H1 (cell line): ENCODE measurements at regions of chr2 and their contacts with region 1.

Region 1: DNA sequence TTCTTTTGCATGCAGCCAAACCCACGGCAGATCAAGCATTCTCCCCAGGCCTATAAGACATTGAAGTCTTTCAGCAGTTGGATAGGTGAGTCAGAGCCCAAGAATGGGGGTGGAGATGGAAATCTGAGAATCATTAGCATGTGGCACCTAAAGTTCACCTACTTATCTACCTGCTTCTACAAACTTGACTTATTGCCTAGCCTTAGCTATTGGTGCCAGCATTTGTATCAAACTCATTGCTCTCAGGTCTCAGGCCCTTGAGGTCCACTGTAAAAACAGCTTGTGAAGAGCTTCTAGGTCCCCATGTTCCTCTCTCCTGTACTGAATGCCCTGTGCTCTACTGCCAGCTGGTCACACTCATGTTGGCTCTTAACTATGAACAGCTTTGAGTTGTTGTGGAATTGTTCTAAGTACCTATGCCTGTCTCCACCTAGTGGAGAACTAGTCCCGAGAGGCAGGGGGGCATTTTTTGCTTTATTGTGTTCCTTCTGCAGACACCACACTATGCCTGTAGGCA is 278.4 kb upstream of the SPRED2 start:
- DNase-seq: peak in 1 of 2 experiments; percentile 5
- H3K4me3 ChIP-seq: no peak overlapping the region
- H3K27ac ChIP-seq: no peak overlapping the region
- H3K4me1 ChIP-seq: no peaks in the 10 kb centered on the region
- H3K27me3 ChIP-seq: no peaks in the 10 kb centered on the region
- CTCF ChIP-seq: peak in 2 of 3 experiments; percentile 67 to 77; a peak in 3 of 4 replicates
- EP300 ChIP-seq: no peak
- POLR2A ChIP-seq: no peak
- RAD21 ChIP-seq: peak; percentile 60 to 70

Region 2: GRCh38 chr2:65620524-65620923 is 90.3 kb before region 1 on chr2:
- CTCF ChIA-PET with region 1: interaction called, 23 read pairs
- POLR2A ChIA-PET with region 1: no interaction called
- DNase-seq: no peak
- H3K4me3 ChIP-seq: no peak overlapping the region
- H3K27ac ChIP-seq: no peak overlapping the region
- H3K4me1 ChIP-seq: no peaks in the 10 kb centered on the region
- H3K27me3 ChIP-seq: peaks cover 0 to 3% (median 0%) of the 10 kb centered on the region in 4 experiments; a peak in 2 of 7 replicates
- CTCF ChIP-seq: peak in 1 of 3 experiments; percentile 12; a peak in 1 of 4 replicates
- EP300 ChIP-seq: no peak
- POLR2A ChIP-seq: no peak
- RAD21 ChIP-seq: peak; percentile 56 to 59

Region 3: DNA sequence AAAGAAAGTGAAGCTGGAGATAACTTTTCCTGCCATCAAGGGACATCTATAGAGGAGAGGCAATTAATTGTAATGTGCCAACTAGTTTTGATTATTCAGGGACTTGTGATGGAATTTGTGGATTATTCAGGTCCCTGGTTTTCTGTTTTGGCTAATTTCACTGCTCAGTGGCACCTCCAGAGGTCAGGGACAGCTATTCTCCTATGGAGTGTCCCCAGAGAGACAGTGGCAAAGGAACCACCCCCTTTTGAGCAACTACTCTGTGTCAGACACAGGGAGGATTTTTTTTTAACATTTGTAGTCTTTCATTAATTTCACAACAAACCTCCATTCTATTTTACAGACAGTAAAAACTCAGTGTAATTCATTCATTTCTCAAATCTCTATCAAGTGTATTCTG is 72.4 kb before region 1 on chr2:
- CTCF ChIA-PET with region 1: interaction called, 27 read pairs
- POLR2A ChIA-PET with region 1: no interaction called
- DNase-seq: no peak
- H3K4me3 ChIP-seq: no peak overlapping the region
- H3K27ac ChIP-seq: no peak overlapping the region
- H3K4me1 ChIP-seq: no peaks in the 10 kb centered on the region; a peak in 1 of 7 replicates
- H3K27me3 ChIP-seq: peaks cover 0 to 3% (median 3%) of the 10 kb centered on the region in 4 experiments; a peak in 2 of 7 replicates
- CTCF ChIP-seq: peak in 2 of 3 experiments; percentile 25 to 46; a peak in 2 of 4 replicates
- EP300 ChIP-seq: no peak
- POLR2A ChIP-seq: no peak
- RAD21 ChIP-seq: peak; percentile 10 to 31; a peak in 1 of 4 replicates

Region 4: GRCh38 chr2:65675350-65675749 is 35.5 kb before region 1 on chr2:
- CTCF ChIA-PET with region 1: interaction called, 11 read pairs
- POLR2A ChIA-PET with region 1: no interaction called
- DNase-seq: no peak
- H3K4me3 ChIP-seq: no peak overlapping the region
- H3K27ac ChIP-seq: no peak overlapping the region
- H3K4me1 ChIP-seq: no peaks in the 10 kb centered on the region
- H3K27me3 ChIP-seq: no peaks in the 10 kb centered on the region
- CTCF ChIP-seq: no peak
- EP300 ChIP-seq: no peak
- POLR2A ChIP-seq: no peak
- RAD21 ChIP-seq: no peak

Region 5: GRCh38 chr2:65686927-65687521 is 23.8 kb before region 1 on chr2:
- CTCF ChIA-PET with region 1: interaction called, 18 read pairs
- POLR2A ChIA-PET with region 1: no interaction called
- DNase-seq: no peak
- H3K4me3 ChIP-seq: no peak overlapping the region
- H3K27ac ChIP-seq: no peak overlapping the region
- H3K4me1 ChIP-seq: no peaks in the 10 kb centered on the region
- H3K27me3 ChIP-seq: no peaks in the 10 kb centered on the region
- CTCF ChIP-seq: peak in 2 of 3 experiments; percentile 41 to 42; a peak in 2 of 4 replicates
- EP300 ChIP-seq: no peak
- POLR2A ChIP-seq: no peak
- RAD21 ChIP-seq: peak; percentile 47 to 57; a peak in 3 of 4 replicates

Region 6: DNA sequence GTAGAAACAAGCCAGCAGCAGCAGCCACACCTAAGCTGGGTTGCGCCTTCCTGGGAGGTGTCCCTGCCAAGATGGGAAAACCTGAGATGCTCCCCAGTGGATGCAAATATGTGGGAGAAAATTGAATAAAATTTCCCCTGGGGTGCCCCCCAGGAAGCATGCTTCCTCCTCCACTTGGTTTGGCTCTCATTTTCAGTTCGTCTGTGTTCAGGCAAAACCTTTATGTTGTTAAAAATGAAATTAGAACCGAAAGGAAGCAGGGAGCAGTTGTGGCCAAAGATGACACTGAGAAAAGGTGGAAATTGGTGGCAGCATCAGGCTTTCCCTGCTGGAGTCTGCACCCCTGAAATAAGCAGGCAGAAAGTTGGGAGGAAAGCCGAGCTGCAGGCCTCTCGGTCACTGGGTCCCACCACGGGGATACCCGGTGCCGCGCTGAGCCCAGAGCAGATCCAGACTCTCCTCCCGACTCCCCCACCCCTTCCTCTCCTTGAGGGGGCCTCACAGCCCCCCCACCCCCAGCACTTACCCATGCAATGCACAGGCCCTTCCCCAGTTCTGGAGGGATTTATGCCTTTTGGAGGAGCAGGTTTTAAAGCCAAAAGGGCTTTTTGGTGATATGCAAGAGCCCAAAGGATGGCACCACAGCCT is 10.7 kb before region 1 on chr2:
- CTCF ChIA-PET with region 1: interaction called, 14 read pairs
- POLR2A ChIA-PET with region 1: no interaction called
- DNase-seq: no peak
- H3K4me3 ChIP-seq: no peak overlapping the region
- H3K27ac ChIP-seq: no peak overlapping the region
- H3K4me1 ChIP-seq: no peaks in the 10 kb centered on the region; a peak in 1 of 7 replicates
- H3K27me3 ChIP-seq: no peaks in the 10 kb centered on the region
- CTCF ChIP-seq: no peak
- EP300 ChIP-seq: no peak
- POLR2A ChIP-seq: no peak
- RAD21 ChIP-seq: no peak

Region 7: GRCh38 chr2:65722028-65722778 is 11.4 kb after region 1 on chr2:
- CTCF ChIA-PET with region 1: interaction called, 24 read pairs
- POLR2A ChIA-PET with region 1: no interaction called
- DNase-seq: peak in 1 of 2 experiments; percentile 10
- H3K4me3 ChIP-seq: no peak overlapping the region
- H3K27ac ChIP-seq: no peak overlapping the region
- H3K4me1 ChIP-seq: peaks cover 0 to 3% (median 0%) of the 10 kb centered on the region in 4 experiments; a peak in 2 of 7 replicates
- H3K27me3 ChIP-seq: no peaks in the 10 kb centered on the region; a peak in 1 of 7 replicates
- CTCF ChIP-seq: peak; percentile 48 to 77 (median 69)
- EP300 ChIP-seq: no peak
- POLR2A ChIP-seq: no peak
- RAD21 ChIP-seq: peak; percentile 93

Region 8: GRCh38 chr2:65788556-65788955 is 77.7 kb after region 1 on chr2:
- CTCF ChIA-PET with region 1: no interaction called
- POLR2A ChIA-PET with region 1: no interaction called
- DNase-seq: no peak
- H3K4me3 ChIP-seq: no peak overlapping the region
- H3K27ac ChIP-seq: no peak overlapping the region
- H3K4me1 ChIP-seq: peaks cover 0 to 2% (median 0%) of the 10 kb centered on the region in 4 experiments; a peak in 2 of 7 replicates
- H3K27me3 ChIP-seq: no peaks in the 10 kb centered on the region; a peak in 1 of 7 replicates
- CTCF ChIP-seq: no peak
- EP300 ChIP-seq: no peak
- POLR2A ChIP-seq: no peak
- RAD21 ChIP-seq: no peak